ENCODE measurements at regions of chr5 and their contacts with region 1.

Region 1: DNA sequence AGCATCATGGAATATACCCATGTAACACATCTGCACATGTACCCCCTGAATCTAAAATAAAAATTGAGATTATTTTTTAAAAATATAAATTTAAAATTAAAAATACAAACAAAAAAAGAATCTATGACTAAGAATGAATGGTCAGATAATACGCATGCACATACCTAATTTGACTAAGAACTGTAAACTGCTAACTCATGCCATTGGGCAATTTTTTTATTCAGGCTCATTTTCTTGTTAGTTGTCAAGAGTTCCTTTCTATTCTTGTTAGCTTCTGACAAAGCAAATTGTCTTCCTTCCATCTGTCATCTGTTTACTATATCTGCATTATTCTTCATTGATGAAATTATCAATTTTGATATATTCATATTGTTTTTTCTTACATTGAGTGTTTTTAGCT is 69.5 kb upstream of the HAND1 start:
- DNase-seq: no peak

Region 2: DNA sequence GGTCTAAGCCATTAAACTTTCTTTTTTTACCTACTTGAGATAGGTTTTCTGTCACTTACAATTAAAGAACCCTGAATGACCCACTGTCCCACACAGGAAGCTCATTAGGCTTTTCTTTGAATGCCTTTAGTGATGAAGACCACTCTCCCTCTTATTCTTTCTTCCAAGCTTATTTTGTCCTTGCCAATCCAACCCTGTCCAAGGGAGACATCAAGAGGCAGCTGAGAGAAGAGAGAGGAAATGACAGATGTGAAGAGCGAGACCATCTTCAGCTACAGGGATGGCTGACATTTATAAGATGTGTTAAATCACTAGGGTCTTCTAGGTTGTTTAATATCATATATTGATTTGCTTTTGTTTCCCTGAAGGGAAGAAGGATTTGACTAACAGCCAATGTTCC is 642.3 kb before region 1 on chr5:
- intact Hi-C with region 1: loop called in 1 of 2 experiments (anchors 5 kb)
- DNase-seq: no peak

Region 3: GRCh38 chr5:154498591-154498990 is 49.0 kb before region 1 on chr5:
- intact Hi-C with region 1: no loop called
- DNase-seq: no peak

Region 4: GRCh38 chr5:154708846-154709245 is 161.3 kb after region 1 on chr5:
- intact Hi-C with region 1: no loop called
- DNase-seq: no peak

Measured in posterior vena cava (tissue), 2 donors.